ENCODE measurements at regions of chr17 and their contacts with region 1.

Region 1: GRCh38 chr17:76458580-76459490 is 5.9 kb upstream of the UBE2O start:
- DNase-seq: peak; percentile 68
- ATAC-seq: peak; percentile 80
- H3K4me3 ChIP-seq: no peak overlapping the region
- H3K4me3 Mint-ChIP-seq: no peak overlapping the region
- H3K27ac ChIP-seq: no peak overlapping the region
- H3K27ac Mint-ChIP-seq: no peak overlapping the region
- H3K4me1 ChIP-seq: no peaks in the 10 kb centered on the region
- H3K4me1 Mint-ChIP-seq: no peaks in the 10 kb centered on the region
- H3K27me3 ChIP-seq: peaks cover 0 to 3% (median 0%) of the 10 kb centered on the region in 4 experiments
- H3K27me3 Mint-ChIP-seq: no peaks in the 10 kb centered on the region
- CTCF ChIP-seq: peak; percentile 21

Region 2: DNA sequence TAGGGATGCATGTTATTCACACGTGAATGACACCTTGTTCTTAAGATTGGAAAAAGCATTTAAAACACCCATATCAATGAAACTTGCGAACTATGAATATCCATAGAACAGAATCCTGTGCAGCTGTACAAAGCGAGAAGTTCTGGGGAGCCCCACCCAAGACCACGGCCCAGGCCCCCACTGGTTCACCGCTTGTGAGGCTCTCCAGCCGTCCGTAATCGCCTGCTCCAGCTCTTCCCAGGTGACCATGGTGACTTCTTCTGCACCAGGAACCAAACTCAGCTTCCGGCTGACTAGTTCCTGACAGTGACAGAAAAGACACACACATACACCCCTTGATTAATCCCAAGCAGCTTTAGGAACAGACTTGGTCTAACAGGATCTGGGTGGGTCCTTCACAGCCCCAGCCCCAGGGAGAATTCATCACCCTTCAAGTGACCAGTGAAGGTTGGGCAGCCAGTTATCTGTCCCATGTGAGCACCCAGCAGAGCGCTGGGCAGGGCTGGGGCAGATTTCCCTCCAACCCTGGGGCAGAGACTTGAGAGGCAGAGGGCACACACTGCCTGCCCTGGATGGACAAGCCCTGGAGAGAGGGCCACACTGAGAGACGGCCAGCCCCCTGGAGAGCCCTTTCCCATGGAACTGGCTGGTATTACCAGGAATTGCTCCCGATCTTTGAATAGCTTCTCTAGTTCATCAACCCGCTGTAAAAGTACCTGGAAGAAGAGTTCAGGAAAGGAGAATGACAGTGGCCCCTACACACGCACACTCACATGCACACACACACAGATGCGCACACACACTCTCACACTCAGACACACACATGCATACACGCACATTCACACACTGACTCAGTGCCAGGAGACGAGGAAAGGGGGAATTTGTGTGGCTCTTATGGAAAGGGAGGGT is 154.4 kb before region 1 on chr17:
- CTCF ChIA-PET with region 1: interaction called, 39 read pairs
- POLR2A ChIA-PET with region 1: interaction called, 3 read pairs
- intact Hi-C with region 1: no loop called
- DNase-seq: no peak
- ATAC-seq: no peak
- H3K4me3 ChIP-seq: no peak overlapping the region
- H3K4me3 Mint-ChIP-seq: no peak overlapping the region
- H3K27ac ChIP-seq: no peak overlapping the region
- H3K27ac Mint-ChIP-seq: no peak overlapping the region
- H3K4me1 ChIP-seq: no peaks in the 10 kb centered on the region
- H3K4me1 Mint-ChIP-seq: peaks cover 3% of the 10 kb centered on the region
- H3K27me3 ChIP-seq: no peaks in the 10 kb centered on the region
- H3K27me3 Mint-ChIP-seq: peaks cover 3% of the 10 kb centered on the region
- CTCF ChIP-seq: no peak

Region 3: GRCh38 chr17:76337413-76337777 is 121.4 kb before region 1 on chr17:
- CTCF ChIA-PET with region 1: no interaction called
- POLR2A ChIA-PET with region 1: no interaction called
- intact Hi-C with region 1: no loop called
- DNase-seq: no peak
- ATAC-seq: no peak
- H3K4me3 ChIP-seq: no peak overlapping the region
- H3K4me3 Mint-ChIP-seq: no peak overlapping the region
- H3K27ac ChIP-seq: no peak overlapping the region
- H3K27ac Mint-ChIP-seq: no peak overlapping the region
- H3K4me1 ChIP-seq: no peaks in the 10 kb centered on the region
- H3K4me1 Mint-ChIP-seq: peaks cover 2% of the 10 kb centered on the region
- H3K27me3 ChIP-seq: no peaks in the 10 kb centered on the region
- H3K27me3 Mint-ChIP-seq: no peaks in the 10 kb centered on the region
- CTCF ChIP-seq: no peak

Region 4: GRCh38 chr17:76427501-76428231 is 31.2 kb before region 1 on chr17:
- CTCF ChIA-PET with region 1: interaction called, 39 read pairs
- POLR2A ChIA-PET with region 1: interaction called, 10 read pairs
- intact Hi-C with region 1: no loop called
- DNase-seq: peak; percentile 87
- ATAC-seq: peak; percentile 87
- H3K4me3 ChIP-seq: peak overlapping the region; percentile 6 to 49 (median 15)
- H3K4me3 Mint-ChIP-seq: peak overlapping the region; percentile 54
- H3K27ac ChIP-seq: peak overlapping the region; percentile 75 to 92
- H3K27ac Mint-ChIP-seq: peak overlapping the region; percentile 93
- H3K4me1 ChIP-seq: peaks cover 78 to 96% of the 10 kb centered on the region in 2 donors
- H3K4me1 Mint-ChIP-seq: peaks cover 73% of the 10 kb centered on the region
- H3K27me3 ChIP-seq: no peaks in the 10 kb centered on the region
- H3K27me3 Mint-ChIP-seq: no peaks in the 10 kb centered on the region
- CTCF ChIP-seq: no peak

Region 5: GRCh38 chr17:76473541-76473985 is 14.7 kb after region 1 on chr17:
- CTCF ChIA-PET with region 1: interaction called, 16 read pairs
- POLR2A ChIA-PET with region 1: interaction called, 6 read pairs
- intact Hi-C with region 1: no loop called
- DNase-seq: no peak
- ATAC-seq: peak; percentile 41
- H3K4me3 ChIP-seq: no peak overlapping the region
- H3K4me3 Mint-ChIP-seq: no peak overlapping the region
- H3K27ac ChIP-seq: no peak overlapping the region
- H3K27ac Mint-ChIP-seq: peak overlapping the region; percentile 71
- H3K4me1 ChIP-seq: peaks cover 0 to 23% of the 10 kb centered on the region in 2 donors
- H3K4me1 Mint-ChIP-seq: peaks cover 27% of the 10 kb centered on the region
- H3K27me3 ChIP-seq: no peaks in the 10 kb centered on the region
- H3K27me3 Mint-ChIP-seq: no peaks in the 10 kb centered on the region
- CTCF ChIP-seq: no peak

Region 6: DNA sequence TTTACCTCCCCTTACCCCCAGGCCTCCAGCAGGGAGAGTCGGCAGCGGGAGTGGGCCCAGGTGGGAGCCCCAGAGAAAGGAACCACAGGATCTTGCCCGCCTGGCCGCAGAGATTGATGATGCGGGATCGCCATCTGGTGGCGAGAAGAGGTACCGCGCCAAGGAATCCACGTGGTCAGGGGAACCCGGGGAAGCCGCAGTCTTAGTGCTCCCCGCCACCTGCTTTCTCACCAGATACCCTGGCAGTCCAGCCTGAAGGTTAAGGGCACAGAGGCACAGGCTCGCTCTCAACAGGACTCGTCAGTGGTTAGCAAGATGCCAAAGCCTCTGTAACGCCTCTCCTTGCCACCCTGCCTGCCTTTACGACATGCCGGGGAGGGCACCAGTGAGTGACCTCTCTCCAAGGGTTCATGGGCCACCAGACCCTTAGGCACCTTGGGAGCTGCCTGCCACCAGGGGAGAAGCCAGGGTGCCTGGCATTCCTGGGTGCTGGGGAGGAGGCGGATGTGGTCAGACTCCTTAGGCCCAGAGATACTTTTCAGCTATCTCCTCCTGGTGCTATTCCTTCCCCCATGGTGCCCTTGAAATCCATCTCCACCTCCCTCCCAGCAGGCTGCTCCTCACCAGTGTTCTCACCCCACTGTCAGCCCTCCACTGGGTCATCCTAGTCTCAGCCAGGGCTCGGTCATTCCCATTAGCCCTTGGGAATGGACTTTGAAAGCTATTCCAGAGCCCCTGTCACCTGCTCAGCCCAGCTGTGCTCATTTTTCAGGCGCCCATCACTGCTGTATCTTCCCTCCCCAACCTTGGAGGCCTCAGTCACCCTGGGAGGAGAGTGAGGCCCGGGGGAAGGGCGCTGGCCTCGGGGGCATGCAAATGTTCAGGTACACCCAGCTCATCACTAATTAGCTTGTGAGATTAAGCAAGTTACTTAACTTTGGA is 47.8 kb after region 1 on chr17:
- CTCF ChIA-PET with region 1: interaction called, 442 read pairs
- POLR2A ChIA-PET with region 1: interaction called, 4 read pairs
- intact Hi-C with region 1: loop called (anchors 1 kb)
- DNase-seq: peak; percentile 92
- ATAC-seq: peak; percentile 73
- H3K4me3 ChIP-seq: no peak overlapping the region
- H3K4me3 Mint-ChIP-seq: no peak overlapping the region
- H3K27ac ChIP-seq: no peak overlapping the region
- H3K27ac Mint-ChIP-seq: peak overlapping the region; percentile 50
- H3K4me1 ChIP-seq: peaks cover 14 to 28% of the 10 kb centered on the region in 2 donors
- H3K4me1 Mint-ChIP-seq: peaks cover 28% of the 10 kb centered on the region
- H3K27me3 ChIP-seq: no peaks in the 10 kb centered on the region
- H3K27me3 Mint-ChIP-seq: peaks cover 2% of the 10 kb centered on the region
- CTCF ChIP-seq: peak; percentile 87

Region 7: GRCh38 chr17:76567634-76568432 is 109.0 kb after region 1 on chr17:
- CTCF ChIA-PET with region 1: no interaction called
- POLR2A ChIA-PET with region 1: no interaction called
- intact Hi-C with region 1: no loop called
- DNase-seq: peak; percentile 71
- ATAC-seq: peak; percentile 82
- H3K4me3 ChIP-seq: no peak overlapping the region
- H3K4me3 Mint-ChIP-seq: peak overlapping the region; percentile 41
- H3K27ac ChIP-seq: peak overlapping the region; percentile 31 to 56
- H3K27ac Mint-ChIP-seq: peak overlapping the region; percentile 88
- H3K4me1 ChIP-seq: peaks cover 19 to 21% of the 10 kb centered on the region in 2 donors
- H3K4me1 Mint-ChIP-seq: peaks cover 29% of the 10 kb centered on the region
- H3K27me3 ChIP-seq: no peaks in the 10 kb centered on the region
- H3K27me3 Mint-ChIP-seq: no peaks in the 10 kb centered on the region
- CTCF ChIP-seq: no peak

Measured in B cell (primary cell).